ENCODE measurements at regions of chrX and their contacts with region 1.

Region 1: GRCh38 chrX:101799387-101799786 is 132.4 kb downstream of the ZMAT1 start:
- DNase-seq: peak; percentile 83
- H3K4me3 Mint-ChIP-seq: no peak overlapping the region
- H3K27ac Mint-ChIP-seq: no peak overlapping the region
- H3K4me1 Mint-ChIP-seq: no peaks in the 10 kb centered on the region
- H3K27me3 Mint-ChIP-seq: peaks cover 12% of the 10 kb centered on the region
- CTCF ChIP-seq: no peak

Region 2: GRCh38 chrX:101415180-101416145 is 383.9 kb before region 1 on chrX:
- CTCF ChIA-PET with region 1: no interaction called
- intact Hi-C with region 1: loop called (anchors 1 kb)
- DNase-seq: peak; percentile 30
- H3K4me3 Mint-ChIP-seq: no peak overlapping the region
- H3K27ac Mint-ChIP-seq: no peak overlapping the region
- H3K4me1 Mint-ChIP-seq: peaks cover 21% of the 10 kb centered on the region
- H3K27me3 Mint-ChIP-seq: peaks cover 21% of the 10 kb centered on the region
- CTCF ChIP-seq: peak; percentile 51

Region 3: GRCh38 chrX:101462892-101463291 is 336.5 kb before region 1 on chrX:
- CTCF ChIA-PET with region 1: no interaction called
- intact Hi-C with region 1: loop called (anchors 2 kb)
- DNase-seq: peak; percentile 23
- H3K4me3 Mint-ChIP-seq: no peak overlapping the region
- H3K27ac Mint-ChIP-seq: no peak overlapping the region
- H3K4me1 Mint-ChIP-seq: no peaks in the 10 kb centered on the region
- H3K27me3 Mint-ChIP-seq: no peaks in the 10 kb centered on the region
- CTCF ChIP-seq: no peak

Region 4: GRCh38 chrX:102029026-102029425 is 229.6 kb after region 1 on chrX:
- CTCF ChIA-PET with region 1: no interaction called
- intact Hi-C with region 1: no loop called
- DNase-seq: no peak
- H3K4me3 Mint-ChIP-seq: no peak overlapping the region
- H3K27ac Mint-ChIP-seq: no peak overlapping the region
- H3K4me1 Mint-ChIP-seq: no peaks in the 10 kb centered on the region
- H3K27me3 Mint-ChIP-seq: no peaks in the 10 kb centered on the region
- CTCF ChIP-seq: no peak

Region 5: DNA sequence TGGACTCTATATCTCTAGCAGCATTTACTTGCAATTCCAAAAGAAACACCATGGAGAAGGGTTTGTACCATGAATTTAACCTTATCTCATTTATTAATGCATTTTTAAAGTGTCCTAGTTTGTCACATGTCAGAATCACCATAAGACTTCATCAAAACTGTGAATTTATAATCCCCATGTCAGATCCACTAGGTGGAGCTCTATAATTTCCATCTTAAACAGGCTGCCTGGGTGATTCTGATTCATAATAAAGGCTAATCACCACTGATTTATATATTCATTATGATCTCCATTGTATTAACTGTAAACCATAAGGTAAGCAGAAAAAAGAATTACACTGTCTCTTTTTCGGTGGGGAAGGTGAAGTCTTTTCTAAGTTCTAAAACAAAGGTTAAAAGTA is 330.1 kb after region 1 on chrX:
- CTCF ChIA-PET with region 1: no interaction called
- intact Hi-C with region 1: no loop called
- DNase-seq: no peak
- H3K4me3 Mint-ChIP-seq: no peak overlapping the region
- H3K27ac Mint-ChIP-seq: no peak overlapping the region
- H3K4me1 Mint-ChIP-seq: no peaks in the 10 kb centered on the region
- H3K27me3 Mint-ChIP-seq: peaks cover 26% of the 10 kb centered on the region
- CTCF ChIP-seq: no peak